ENCODE measurements at regions of chr17 and their contacts with region 1.

Region 1: DNA sequence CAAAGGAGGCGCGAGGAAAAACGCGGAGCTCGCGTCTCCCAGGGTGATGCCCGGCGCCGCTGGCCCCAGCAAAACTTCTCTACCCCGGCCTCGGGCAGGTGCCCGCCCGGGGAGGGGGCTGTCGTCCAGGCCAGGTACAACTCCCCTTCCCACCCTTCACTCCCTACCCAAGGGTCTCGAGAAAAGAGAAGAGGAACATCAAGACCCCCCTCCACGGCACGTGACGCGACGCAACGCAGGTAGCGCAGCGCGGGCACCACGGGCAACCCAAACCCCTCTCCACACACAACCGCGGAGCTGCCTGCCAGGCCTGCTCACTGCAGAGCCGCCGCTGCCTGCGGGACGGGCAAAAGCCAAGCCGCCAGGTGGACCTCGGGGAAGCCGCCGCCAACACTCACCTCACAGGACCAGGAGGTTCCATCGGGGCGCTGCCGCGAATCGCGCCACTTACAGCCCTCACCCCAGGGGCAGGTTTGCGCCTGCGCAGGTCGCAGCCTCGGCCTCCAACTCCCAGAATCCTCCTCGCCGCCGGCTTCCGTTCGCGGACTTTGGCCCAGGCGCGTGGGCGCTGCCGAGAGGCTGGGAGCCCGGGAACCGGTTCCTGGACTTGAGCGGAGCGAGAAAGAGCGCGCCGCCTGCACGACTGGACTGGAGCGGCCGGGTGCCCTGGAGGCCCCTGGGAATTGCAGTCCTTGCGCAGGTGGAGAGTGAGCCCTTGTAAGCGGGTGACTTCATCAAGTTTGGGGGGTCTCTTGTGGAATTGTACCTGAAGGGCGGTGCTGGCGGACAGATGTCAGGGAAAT is at the start of gene ZNF232:
- DNase-seq: peak; percentile 95
- H3K4me3 ChIP-seq: peak within 1 kb of the TSS; percentile 85
- H3K27ac ChIP-seq: peak within 1 kb of the TSS; percentile 62
- H3K4me1 ChIP-seq: peaks cover 16% of the 10 kb centered on the region
- CTCF ChIP-seq: 0 out of 2 replicates have a peak, but pooled peaks have one; percentile 10
- total RNA-seq, gene ZNF232: 28.3 and 32.0 TPM in 2 replicates

Region 2: GRCh38 chr17:5191541-5192417 is 80.2 kb after region 1 on chr17 and contains the start of gene ZNF594:
- CTCF ChIA-PET with region 1: no interaction called
- POLR2A ChIA-PET with region 1: interaction called, 4 read pairs
- intact Hi-C with region 1: loop called (anchors 1 kb)
- DNase-seq: peak; percentile 97
- H3K4me3 ChIP-seq: peak within 1 kb of the TSS; percentile 97
- H3K27ac ChIP-seq: peak within 1 kb of the TSS; percentile 46
- H3K4me1 ChIP-seq: peaks cover 24% of the 10 kb centered on the region
- CTCF ChIP-seq: peak; percentile 86
- total RNA-seq, gene ZNF594: 42.5 and 43.4 TPM in 2 replicates

Region 3: DNA sequence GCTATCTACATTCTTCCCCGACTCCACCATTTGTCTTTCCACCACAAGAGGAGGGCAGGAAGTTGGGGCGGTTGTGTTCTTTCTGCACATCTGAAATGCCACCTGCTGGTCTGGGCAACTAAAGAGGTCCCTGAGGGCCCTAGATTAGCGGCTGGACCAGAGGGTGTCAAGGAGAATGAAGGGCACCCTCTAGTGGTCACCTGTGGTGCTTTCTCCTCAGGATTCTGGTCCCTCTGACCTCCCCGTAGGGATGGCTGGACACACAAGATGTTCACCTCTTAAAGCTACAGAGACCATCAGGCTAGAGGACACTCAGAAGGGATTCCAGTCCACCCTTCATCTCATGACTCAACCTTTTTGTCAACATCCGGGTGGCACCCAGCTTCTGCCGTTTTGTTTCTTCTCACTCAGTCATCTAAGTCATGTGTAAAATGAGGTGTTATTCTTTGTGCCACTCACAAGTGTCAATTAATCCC is 126.0 kb after region 1 on chr17:
- CTCF ChIA-PET with region 1: no interaction called
- POLR2A ChIA-PET with region 1: no interaction called
- intact Hi-C with region 1: loop called (anchors 1 kb)
- DNase-seq: peak; percentile 96
- H3K4me3 ChIP-seq: no peak overlapping the region
- H3K27ac ChIP-seq: peak overlapping the region; percentile 51
- H3K4me1 ChIP-seq: peaks cover 66% of the 10 kb centered on the region
- CTCF ChIP-seq: peak; percentile 99